Aorta (tissue), 5 donors: ENCODE measurements at regions of chr6 and their contacts with region 1.

Region 1: DNA sequence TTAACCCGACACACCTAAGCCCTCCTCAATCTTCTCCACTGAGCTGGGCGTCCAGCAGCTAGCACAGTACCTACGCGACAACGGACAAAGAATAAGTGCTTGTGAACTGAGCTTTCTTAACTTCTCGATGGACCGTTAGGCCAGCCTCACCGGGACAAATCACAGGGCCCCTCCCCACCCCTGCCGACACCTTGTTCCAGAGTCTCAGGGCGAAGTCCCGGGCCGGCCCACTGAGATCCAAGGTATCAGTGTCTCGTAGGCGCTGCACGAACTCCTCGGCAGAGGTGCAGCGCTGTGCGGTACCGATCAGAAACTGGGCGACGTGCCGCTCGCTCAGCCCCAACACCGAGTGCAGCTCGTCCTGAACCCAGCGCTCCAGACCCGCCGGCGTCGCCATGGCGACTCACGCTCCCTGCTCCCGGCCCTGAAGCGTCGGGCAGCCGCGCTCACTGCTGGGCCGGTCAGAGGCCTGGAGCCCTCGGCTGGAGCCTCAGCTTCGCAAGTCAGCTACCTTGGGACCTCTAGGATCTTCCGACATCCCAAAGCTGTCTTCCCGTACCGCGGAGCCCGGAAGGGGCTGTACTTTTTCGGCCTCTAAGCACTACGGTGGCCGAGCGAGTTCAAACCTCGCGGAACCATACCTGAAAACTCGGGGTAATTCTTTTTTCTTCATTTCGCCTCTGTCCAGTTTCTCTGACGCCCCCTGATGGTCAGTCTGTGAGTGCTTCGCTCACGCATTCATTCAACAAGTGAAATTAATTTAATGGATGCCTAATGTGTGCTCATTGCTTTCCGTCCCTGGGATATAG is at the start of gene DHX16:
- DNase-seq: peak; percentile 98
- ATAC-seq: peak; percentile 96
- H3K4me3 ChIP-seq: peak within 1 kb of the TSS; percentile 63 to 69
- H3K27ac ChIP-seq: peak within 1 kb of the TSS in 1 of 2 donors; percentile 2
- H3K4me1 ChIP-seq: no peaks in the 10 kb centered on the region
- H3K27me3 ChIP-seq: no peaks in the 10 kb centered on the region
- total RNA-seq, gene DHX16: 22.3 to 25.2 TPM

Region 2: DNA sequence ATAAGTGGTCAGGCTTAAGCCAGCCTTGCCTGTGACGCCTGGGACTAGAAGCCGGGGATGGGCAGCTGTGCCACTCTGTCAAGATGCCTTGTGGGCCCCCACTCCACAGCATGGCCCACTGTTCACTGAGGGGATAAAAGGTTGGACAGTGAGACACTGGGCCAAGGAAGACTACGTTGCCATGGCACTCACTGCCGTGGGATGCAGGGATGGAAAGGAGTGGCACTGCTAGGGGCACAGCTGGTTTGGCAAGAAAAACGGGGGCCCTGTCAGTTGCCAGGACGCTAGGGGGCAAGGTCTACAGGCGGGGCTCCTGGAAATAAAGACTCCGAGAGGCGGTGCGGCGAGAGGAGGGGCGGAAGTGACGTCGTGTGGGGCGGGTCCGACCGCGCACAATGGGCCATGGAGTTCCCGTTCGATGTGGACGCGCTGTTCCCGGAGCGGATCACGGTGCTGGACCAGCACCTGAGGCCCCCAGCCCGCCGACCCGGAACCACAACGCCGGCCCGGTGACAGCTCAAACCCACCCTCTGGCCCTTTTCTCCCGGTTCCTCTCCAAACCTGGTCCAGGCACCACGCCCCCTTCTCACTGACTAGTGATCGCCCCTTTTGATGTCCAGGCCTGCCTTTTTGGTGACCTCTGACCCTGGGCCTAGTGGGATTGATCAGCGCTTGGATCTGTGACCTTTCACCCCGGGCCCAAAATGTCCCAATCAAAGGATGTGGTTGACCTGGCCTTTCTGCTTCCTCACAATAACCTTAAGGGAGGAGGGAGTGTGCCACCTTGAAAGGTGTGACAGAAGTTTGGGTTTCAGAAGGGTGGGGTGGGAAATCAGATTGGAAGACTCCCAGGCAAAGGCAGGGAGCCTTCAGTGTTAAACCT is 45.9 kb before region 1 on chr6 and contains the start of gene ATAT1:
- intact Hi-C with region 1: loop called in 1 of 2 experiments (anchors 5 kb)
- DNase-seq: peak; percentile 92 to 97
- ATAC-seq: peak; percentile 94
- H3K4me3 ChIP-seq: peak within 1 kb of the TSS; percentile 22 to 52
- H3K27ac ChIP-seq: peak within 1 kb of the TSS; percentile 16 to 95
- H3K4me1 ChIP-seq: no peaks in the 10 kb centered on the region
- H3K27me3 ChIP-seq: no peaks in the 10 kb centered on the region
- total RNA-seq, gene ATAT1: 5.8 to 12.9 TPM

Region 3: GRCh38 chr6:30656513-30656912 is 16.1 kb before region 1 on chr6:
- intact Hi-C with region 1: no loop called
- DNase-seq: peak in 1 of 2 donors; percentile 74
- ATAC-seq: no peak
- H3K4me3 ChIP-seq: no peak overlapping the region
- H3K27ac ChIP-seq: no peak overlapping the region
- H3K4me1 ChIP-seq: no peaks in the 10 kb centered on the region
- H3K27me3 ChIP-seq: no peaks in the 10 kb centered on the region

Region 4: GRCh38 chr6:30877419-30878371 is 205.0 kb after region 1 on chr6:
- intact Hi-C with region 1: loop called in 1 of 2 experiments (anchors 10 kb)
- DNase-seq: peak; percentile 93 to 95
- ATAC-seq: peak; percentile 92
- H3K4me3 ChIP-seq: peak overlapping the region in 1 of 2 donors; percentile 31
- H3K27ac ChIP-seq: peak overlapping the region; percentile 39 to 88
- H3K4me1 ChIP-seq: no peaks in the 10 kb centered on the region
- H3K27me3 ChIP-seq: no peaks in the 10 kb centered on the region

Region 5: DNA sequence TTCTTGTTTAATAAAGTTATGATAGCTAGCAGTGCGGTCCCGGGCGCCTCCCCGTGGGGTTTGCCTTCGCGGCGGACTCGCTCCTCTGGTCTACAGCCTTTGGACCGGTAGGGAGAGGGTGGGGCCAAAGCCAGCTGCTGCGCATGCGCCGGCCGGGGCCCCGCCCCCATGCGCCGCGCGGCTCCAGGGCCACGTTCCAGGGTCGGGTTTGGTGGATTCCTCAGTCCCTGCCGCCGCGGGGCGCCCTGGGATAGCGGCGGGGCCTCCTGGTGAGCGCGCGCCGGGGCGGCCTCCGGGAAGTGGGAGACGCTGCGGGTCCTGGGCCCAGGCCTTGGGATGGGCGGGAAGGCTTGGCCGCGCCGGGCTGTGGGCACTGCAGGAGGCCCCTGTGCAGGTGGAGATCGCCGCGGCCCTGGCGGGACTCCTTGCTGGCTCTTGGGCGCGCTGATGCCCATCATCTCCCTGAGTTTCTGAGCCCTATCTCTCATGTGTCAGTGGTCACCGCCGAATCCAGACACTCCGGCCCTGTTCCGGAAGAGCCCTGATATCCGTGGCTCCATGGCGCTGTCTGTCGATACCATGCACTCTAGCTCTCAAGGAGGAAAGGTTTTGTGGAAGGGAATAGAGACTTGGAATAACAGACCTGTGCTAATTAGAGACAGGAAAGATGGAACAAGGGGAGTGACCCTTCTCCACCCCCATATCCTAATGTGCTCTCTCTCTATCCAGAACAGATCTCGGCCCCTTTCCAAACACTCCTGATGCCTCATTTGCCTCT is 241.6 kb after region 1 on chr6 and contains the start of gene VARS2:
- intact Hi-C with region 1: no loop called
- DNase-seq: peak; percentile 93 to 96
- ATAC-seq: peak; percentile 96
- H3K4me3 ChIP-seq: peak within 1 kb of the TSS; percentile 28 to 33
- H3K27ac ChIP-seq: peak within 1 kb of the TSS; percentile 33 to 72
- H3K4me1 ChIP-seq: peaks cover 0 to 1% of the 10 kb centered on the region in 2 donors
- H3K27me3 ChIP-seq: no peaks in the 10 kb centered on the region
- total RNA-seq, gene VARS2: 16.0 to 19.1 TPM

Region 6: GRCh38 chr6:31308050-31308844 is 635.6 kb after region 1 on chr6:
- intact Hi-C with region 1: no loop called
- DNase-seq: peak; percentile 50 to 77
- ATAC-seq: peak; percentile 44
- H3K4me3 ChIP-seq: no peak overlapping the region
- H3K27ac ChIP-seq: no peak overlapping the region
- H3K4me1 ChIP-seq: no peaks in the 10 kb centered on the region
- H3K27me3 ChIP-seq: no peaks in the 10 kb centered on the region